ENCODE measurements at regions of chrX and their contacts with region 1.

Region 1: GRCh38 chrX:31036895-31037294 is 34.9 kb downstream of the FTHL17 start:
- DNase-seq: peak; percentile 61
- H3K4me3 ChIP-seq: no peak overlapping the region
- H3K27ac ChIP-seq: no peak overlapping the region
- H3K4me1 ChIP-seq: no peaks in the 10 kb centered on the region
- H3K27me3 ChIP-seq: no peaks in the 10 kb centered on the region
- CTCF ChIP-seq: peak; percentile 84 to 88

Region 2: DNA sequence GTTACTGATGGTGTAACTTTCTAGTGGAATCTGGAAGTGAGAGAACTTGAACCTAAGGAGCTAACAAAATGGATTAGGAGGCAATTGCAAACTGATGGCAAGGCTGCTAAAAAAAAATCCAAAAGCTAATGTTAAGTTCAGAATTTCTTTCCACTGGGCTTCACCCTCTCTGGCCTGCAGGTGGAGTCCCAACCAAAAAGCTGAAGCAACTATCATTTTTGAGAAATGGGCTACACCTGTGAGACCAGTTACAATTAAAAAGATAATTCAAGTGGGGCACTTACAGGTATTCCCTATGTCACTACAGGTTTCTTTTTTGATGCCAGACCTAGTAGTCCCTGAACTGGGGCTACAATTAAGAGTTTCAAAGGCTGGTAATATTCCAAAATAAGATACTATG is 177.0 kb after region 1 on chrX:
- CTCF ChIA-PET with region 1: no interaction called
- dilution Hi-C with region 1: no loop called
- in situ Hi-C with region 1: no loop called
- intact Hi-C with region 1: loop called (anchors 5 kb)
- DNase-seq: peak; percentile 32
- H3K4me3 ChIP-seq: no peak overlapping the region
- H3K27ac ChIP-seq: peak overlapping the region; percentile 31
- H3K4me1 ChIP-seq: peaks cover 22% of the 10 kb centered on the region
- H3K27me3 ChIP-seq: no peaks in the 10 kb centered on the region
- CTCF ChIP-seq: peak; percentile 74 to 81

Region 3: GRCh38 chrX:31293409-31293808 is 256.5 kb after region 1 on chrX:
- CTCF ChIA-PET with region 1: no interaction called
- dilution Hi-C with region 1: no loop called
- in situ Hi-C with region 1: no loop called
- intact Hi-C with region 1: loop called (anchors 1 kb)
- DNase-seq: no peak
- H3K4me3 ChIP-seq: no peak overlapping the region
- H3K27ac ChIP-seq: no peak overlapping the region
- H3K4me1 ChIP-seq: peaks cover 10% of the 10 kb centered on the region
- H3K27me3 ChIP-seq: no peaks in the 10 kb centered on the region
- CTCF ChIP-seq: peak in 1 of 2 donors; percentile 39

Region 4: DNA sequence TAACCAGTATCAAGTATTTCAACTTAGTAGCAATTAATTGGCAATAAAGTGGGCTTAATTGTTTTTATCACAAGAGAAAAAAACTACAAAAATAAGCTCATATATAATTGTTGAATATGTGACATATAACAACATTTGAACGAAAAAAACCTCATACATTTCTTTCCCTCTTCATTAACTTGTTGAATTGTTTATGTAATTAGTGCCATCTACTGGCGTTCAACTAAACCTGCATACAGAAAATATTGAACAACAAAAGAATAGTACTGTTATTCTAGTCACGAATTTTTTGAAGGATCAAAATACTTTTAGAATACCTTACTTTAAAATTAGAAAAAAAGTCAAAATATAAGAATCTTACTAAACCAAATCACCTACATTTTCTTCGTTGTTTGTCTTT is 621.5 kb after region 1 on chrX:
- CTCF ChIA-PET with region 1: interaction called, 3 read pairs
- dilution Hi-C with region 1: no loop called
- in situ Hi-C with region 1: loop called (anchors 5 to 10 kb)
- intact Hi-C with region 1: loop called (anchors 1 kb)
- DNase-seq: no peak
- H3K4me3 ChIP-seq: no peak overlapping the region
- H3K27ac ChIP-seq: no peak overlapping the region
- H3K4me1 ChIP-seq: no peaks in the 10 kb centered on the region
- H3K27me3 ChIP-seq: peaks cover 9% of the 10 kb centered on the region
- CTCF ChIP-seq: peak; percentile 53 to 73